ENCODE measurements at regions of chr2 and their contacts with region 1.

Region 1: GRCh38 chr2:61993444-61994024 is 88.1 kb downstream of the COMMD1 start:
- DNase-seq: no peak

Region 2: GRCh38 chr2:61910603-61911002 is 82.9 kb before region 1 on chr2:
- intact Hi-C with region 1: loop called (anchors 5 kb)
- DNase-seq: no peak

Region 3: GRCh38 chr2:62016957-62017356 is 23.4 kb after region 1 on chr2:
- intact Hi-C with region 1: no loop called
- DNase-seq: no peak

Region 4: GRCh38 chr2:62071126-62071598 is 77.6 kb after region 1 on chr2:
- intact Hi-C with region 1: no loop called
- DNase-seq: no peak

Region 5: GRCh38 chr2:62149708-62150107 is 156.2 kb after region 1 on chr2:
- intact Hi-C with region 1: no loop called
- DNase-seq: no peak

Region 6: GRCh38 chr2:62293490-62294271 is 300.1 kb after region 1 on chr2:
- intact Hi-C with region 1: loop called (anchors 5 kb)
- DNase-seq: no peak

Region 7: GRCh38 chr2:62334440-62335058 is 341.0 kb after region 1 on chr2:
- intact Hi-C with region 1: loop called (anchors 5 kb)
- DNase-seq: no peak

Region 8: DNA sequence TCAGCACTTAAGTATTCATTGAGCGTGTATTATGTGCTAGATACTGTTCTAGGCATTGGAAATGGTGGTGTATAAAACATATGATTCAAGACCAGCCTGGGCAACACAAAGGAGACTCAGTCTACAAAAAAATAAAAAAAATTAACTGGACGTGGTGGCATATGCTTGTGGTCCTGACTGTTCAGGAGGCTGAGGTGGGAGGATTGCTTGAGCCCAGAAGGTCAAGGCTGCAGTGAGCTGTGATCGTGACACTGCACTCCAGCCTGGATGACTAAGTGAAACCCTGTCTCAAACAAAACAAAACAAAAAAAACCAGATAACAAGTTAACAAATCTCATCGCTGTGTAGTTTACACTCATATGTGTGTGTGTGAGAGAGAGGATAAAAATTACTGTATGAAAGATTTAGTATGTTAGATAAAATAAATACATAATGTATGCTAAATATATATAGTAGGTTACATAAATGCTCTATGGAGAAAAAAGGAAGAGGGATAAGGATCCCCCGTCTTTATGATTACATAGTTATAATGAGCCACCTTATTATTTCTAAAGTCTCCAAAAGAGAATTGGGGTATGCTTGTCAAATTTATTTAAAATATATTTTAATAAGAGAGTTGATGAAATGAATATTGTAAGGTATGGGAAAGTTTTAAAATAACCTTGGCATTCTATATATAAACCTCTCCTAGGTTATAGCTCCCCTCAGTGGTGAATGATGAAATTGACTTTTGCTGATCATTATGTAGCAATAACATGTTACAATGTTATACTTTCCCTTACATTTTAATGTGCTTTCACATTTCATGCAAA is 781.2 kb after region 1 on chr2:
- intact Hi-C with region 1: loop called (anchors 10 kb)
- DNase-seq: no peak